ENCODE measurements at regions of chr11 and their contacts with region 1.

Region 1: DNA sequence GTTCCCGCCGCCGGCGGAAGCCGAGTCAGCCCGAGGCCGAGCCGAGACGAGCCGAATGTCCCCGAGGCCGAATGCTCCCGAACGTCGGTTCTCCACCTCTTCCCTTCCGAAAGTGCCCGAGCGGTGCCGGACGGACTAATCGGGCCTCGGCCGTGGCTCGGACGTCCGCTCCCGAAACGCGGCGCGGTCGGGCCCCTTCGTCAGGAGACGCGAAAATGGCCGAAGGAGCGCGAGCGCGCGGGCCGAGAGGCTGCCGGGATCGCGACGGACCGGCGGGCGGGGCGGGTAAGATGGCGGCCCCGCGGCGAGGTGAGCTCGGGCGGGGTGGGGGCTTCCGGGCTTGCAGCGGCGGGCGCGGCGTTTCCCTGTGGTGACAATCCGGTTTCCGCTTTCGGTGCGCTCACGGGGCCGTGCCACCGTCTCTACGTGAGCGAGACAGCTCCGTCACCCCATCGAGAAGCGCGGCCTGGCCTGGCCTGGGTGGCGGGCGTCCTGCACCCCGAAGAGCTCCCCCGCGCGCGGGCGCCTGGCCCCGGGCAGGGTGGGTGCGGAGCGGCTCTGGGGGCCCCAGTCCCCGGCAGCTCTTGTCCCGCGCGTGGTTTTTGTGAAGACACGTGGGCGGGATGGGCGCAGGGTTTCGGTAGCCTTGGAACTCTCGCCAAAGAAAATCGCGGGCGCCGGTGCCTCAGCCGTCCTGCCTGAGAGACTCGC is at the start of gene TMEM80:
- DNase-seq: peak; percentile 95
- ATAC-seq: peak; percentile 71
- H3K4me3 Mint-ChIP-seq: peak within 1 kb of the TSS; percentile 87
- H3K27ac Mint-ChIP-seq: peak within 1 kb of the TSS; percentile 94
- H3K4me1 Mint-ChIP-seq: peaks cover 46% of the 10 kb centered on the region
- H3K27me3 Mint-ChIP-seq: no peaks in the 10 kb centered on the region
- CTCF ChIP-seq: no peak
- total RNA-seq, gene TMEM80: 34.1 and 44.4 TPM in 2 replicates

Region 2: DNA sequence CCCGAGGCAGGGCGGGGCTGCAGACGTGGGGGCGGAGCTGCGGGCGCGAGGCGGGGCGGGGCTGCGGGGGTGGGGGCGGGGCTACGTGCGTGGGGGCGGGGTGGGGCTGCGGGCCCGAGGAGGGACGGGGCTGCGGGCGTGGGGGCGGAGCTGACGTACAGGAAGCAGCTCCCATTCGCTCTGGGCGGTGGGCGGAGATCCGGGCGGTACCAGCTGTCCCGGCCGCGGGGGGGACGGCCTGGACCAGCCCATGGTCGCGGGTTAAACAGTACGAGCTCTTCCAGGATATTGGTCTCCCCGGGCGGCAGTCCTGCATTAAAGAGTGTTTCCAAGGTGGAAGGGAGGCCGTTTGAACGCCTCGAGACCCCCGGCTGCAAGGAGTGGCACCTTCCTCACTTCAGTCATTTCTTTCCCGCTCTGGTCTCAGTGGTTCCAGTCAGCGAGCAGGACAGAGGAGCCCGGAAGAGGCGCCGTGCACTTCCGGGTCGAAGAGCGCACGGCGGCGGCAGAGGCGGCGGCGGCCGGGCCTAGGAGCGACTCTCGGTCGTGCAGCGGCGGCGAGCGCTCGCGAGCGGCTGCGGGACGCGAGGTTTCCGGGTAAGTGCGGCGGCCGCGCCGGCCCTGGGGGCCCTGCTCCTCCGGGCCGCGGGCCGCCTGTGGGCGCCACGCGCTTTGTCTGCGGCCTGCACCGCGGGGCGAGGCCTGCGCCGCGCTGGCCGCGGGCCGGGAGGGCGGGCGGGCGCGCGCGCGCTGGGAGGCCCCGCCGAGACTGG is 119.5 kb before region 1 on chr11 and contains the start of gene PHRF1:
- CTCF ChIA-PET with region 1: no interaction called
- POLR2A ChIA-PET with region 1: interaction called, 11 read pairs
- intact Hi-C with region 1: no loop called
- DNase-seq: peak; percentile 93
- ATAC-seq: peak; percentile 90
- H3K4me3 Mint-ChIP-seq: peak within 1 kb of the TSS; percentile 97
- H3K27ac Mint-ChIP-seq: peak within 1 kb of the TSS; percentile 100
- H3K4me1 Mint-ChIP-seq: peaks cover 39% of the 10 kb centered on the region
- H3K27me3 Mint-ChIP-seq: peaks cover 10% of the 10 kb centered on the region
- CTCF ChIP-seq: no peak
- total RNA-seq, gene PHRF1: 42.7 and 49.6 TPM in 2 replicates

Region 3: DNA sequence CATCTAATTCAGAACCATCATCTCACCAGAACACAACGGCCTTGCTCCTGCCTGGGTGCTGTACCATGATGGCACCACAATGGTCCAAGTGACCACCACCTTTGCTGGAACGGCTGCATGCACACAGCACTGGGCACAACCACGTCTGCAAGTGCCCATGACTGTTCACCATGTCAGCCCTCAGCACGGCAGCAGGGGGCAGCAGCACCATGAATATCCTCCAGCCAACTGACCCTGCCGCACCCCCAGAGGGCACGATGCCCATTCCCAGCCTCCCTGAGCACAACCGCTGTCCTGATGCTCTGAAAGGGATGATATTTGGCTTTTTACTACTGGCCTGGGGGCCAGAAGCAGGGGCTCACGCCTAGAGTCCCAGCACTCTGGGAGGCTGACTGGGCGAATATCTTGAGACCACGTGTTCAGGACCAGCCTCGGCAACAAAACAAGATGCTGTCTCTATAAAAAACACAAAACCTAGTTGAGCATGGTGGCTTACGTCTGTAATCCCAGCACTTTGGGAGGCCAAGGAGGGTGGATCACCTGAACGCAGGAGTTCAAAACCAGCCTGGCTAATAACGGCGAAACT is 32.9 kb before region 1 on chr11:
- CTCF ChIA-PET with region 1: no interaction called
- POLR2A ChIA-PET with region 1: interaction called, 4 read pairs
- intact Hi-C with region 1: loop called (anchors 2 kb)
- DNase-seq: peak; percentile 51
- ATAC-seq: peak; percentile 85
- H3K4me3 Mint-ChIP-seq: no peak overlapping the region
- H3K27ac Mint-ChIP-seq: no peak overlapping the region
- H3K4me1 Mint-ChIP-seq: peaks cover 4% of the 10 kb centered on the region
- H3K27me3 Mint-ChIP-seq: no peaks in the 10 kb centered on the region
- CTCF ChIP-seq: no peak

Region 4: GRCh38 chr11:727859-728748 is 32.4 kb after region 1 on chr11:
- CTCF ChIA-PET with region 1: interaction called, 70 read pairs
- POLR2A ChIA-PET with region 1: interaction called, 95 read pairs
- intact Hi-C with region 1: no loop called
- DNase-seq: peak; percentile 79
- ATAC-seq: peak; percentile 85
- H3K4me3 Mint-ChIP-seq: no peak overlapping the region
- H3K27ac Mint-ChIP-seq: no peak overlapping the region
- H3K4me1 Mint-ChIP-seq: peaks cover 8% of the 10 kb centered on the region
- H3K27me3 Mint-ChIP-seq: peaks cover 5% of the 10 kb centered on the region
- CTCF ChIP-seq: peak; percentile 91

Region 5: DNA sequence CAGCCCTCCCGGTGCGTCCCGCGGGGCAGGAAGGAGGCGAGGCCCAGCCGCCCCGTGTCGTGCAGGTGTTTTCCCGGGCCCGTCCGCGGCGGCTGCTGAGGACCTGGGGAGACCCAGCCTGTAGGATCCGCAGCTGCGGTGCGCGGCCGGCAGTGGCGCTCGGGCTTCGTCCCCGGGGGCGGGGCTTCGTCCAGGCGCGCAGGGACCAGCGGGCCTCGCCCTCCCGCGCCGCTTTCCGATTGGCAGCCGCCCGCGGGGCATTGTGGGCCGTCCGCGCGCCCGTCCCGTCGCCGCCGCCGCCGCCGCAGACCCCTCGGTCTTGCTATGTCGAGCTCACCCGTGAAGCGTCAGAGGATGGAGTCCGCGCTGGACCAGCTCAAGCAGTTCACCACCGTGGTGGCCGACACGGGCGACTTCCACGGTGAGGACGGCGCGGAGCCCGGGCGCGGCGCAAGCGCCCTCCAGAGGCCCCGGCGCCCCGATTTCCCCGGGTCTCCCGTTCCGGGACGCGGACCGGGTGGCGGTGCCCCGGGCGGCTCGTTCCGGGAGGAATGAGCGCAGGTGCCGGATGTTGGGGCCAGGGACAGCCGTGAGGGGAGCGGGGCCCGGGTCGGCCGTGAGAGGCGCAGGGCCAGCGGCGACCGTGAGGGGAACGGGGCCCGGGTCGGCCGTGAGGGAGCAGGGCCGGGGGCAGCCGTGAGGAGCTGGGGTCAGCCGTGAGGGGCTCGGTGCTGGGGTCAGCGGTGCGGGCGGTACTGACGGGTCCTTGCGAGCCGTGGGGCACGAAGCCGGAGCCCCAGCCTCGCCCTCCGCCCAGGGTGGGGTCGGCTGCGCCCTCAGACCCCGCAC is 51.7 kb after region 1 on chr11 and contains the start of gene TALDO1:
- CTCF ChIA-PET with region 1: interaction called, 8 read pairs
- POLR2A ChIA-PET with region 1: interaction called, 26 read pairs
- intact Hi-C with region 1: loop called (anchors 1 kb)
- DNase-seq: peak; percentile 91
- ATAC-seq: peak; percentile 91
- H3K4me3 Mint-ChIP-seq: peak within 1 kb of the TSS; percentile 86
- H3K27ac Mint-ChIP-seq: peak within 1 kb of the TSS; percentile 82
- H3K4me1 Mint-ChIP-seq: peaks cover 24% of the 10 kb centered on the region
- H3K27me3 Mint-ChIP-seq: no peaks in the 10 kb centered on the region
- CTCF ChIP-seq: no peak
- total RNA-seq, gene TALDO1: 194 and 244 TPM in 2 replicates

Region 6: DNA sequence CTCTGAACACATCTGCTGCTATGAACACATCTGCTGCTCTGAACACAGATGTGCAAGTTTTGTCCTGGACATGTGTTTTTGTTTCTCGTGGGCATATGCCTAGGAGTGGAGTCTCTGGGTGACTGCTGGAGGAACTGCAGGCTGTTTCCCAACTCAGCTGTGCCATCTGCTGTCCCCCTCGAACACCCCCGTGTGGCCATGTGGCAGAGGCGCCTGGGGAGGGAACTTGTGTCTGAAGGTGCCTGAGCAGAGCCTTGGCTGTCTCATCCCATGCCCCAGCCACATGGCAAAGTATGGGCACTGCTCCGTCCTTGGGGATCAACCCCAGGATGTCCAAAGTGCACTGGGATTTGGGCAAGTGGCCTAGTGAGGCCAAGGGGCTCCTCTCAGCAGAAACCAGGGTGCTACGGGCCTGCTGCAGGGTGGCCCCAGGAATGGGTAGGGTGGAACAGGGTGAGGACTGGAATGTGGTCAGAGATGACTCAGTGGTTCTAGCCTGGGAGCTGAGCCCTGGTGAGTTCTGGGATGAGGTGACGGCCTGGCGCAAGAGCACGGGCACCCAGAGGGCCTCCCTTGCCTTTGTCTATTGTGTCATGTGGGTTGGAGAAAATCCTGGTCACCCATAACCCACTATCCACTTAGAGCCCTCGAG is 66.9 kb after region 1 on chr11:
- CTCF ChIA-PET with region 1: no interaction called
- POLR2A ChIA-PET with region 1: no interaction called
- intact Hi-C with region 1: no loop called
- DNase-seq: no peak
- ATAC-seq: no peak
- H3K4me3 Mint-ChIP-seq: no peak overlapping the region
- H3K27ac Mint-ChIP-seq: no peak overlapping the region
- H3K4me1 Mint-ChIP-seq: peaks cover 3% of the 10 kb centered on the region
- H3K27me3 Mint-ChIP-seq: no peaks in the 10 kb centered on the region
- CTCF ChIP-seq: no peak